CD4-positive, alpha-beta memory T cell (primary cell): ENCODE measurements at regions of chr6 and their contacts with region 1.

Region 1: DNA sequence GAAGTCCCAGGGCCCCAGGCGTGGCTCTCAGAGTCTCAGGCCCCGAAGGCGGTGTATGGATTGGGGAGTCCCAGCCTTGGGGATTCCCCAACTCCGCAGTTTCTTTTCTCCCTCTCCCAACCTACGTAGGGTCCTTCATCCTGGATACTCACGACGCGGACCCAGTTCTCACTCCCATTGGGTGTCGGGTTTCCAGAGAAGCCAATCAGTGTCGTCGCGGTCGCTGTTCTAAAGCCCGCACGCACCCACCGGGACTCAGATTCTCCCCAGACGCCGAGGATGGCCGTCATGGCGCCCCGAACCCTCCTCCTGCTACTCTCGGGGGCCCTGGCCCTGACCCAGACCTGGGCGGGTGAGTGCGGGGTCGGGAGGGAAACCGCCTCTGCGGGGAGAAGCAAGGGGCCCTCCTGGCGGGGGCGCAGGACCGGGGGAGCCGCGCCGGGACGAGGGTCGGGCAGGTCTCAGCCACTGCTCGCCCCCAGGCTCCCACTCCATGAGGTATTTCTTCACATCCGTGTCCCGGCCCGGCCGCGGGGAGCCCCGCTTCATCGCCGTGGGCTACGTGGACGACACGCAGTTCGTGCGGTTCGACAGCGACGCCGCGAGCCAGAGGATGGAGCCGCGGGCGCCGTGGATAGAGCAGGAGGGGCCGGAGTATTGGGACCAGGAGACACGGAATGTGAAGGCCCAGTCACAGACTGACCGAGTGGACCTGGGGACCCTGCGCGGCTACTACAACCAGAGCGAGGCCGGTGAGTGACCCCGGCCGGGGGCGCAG is at the start of gene HLA-A:
- DNase-seq: peak; percentile 90 to 98 (median 95)
- H3K4me3 ChIP-seq: peak within 1 kb of the TSS; percentile 62 to 78
- H3K4me3 Mint-ChIP-seq: peak within 1 kb of the TSS; percentile 95 to 100 (median 99)
- H3K27ac ChIP-seq: peak within 1 kb of the TSS; percentile 100
- H3K27ac Mint-ChIP-seq: peak within 1 kb of the TSS; percentile 100
- H3K4me1 ChIP-seq: peaks cover 46% of the 10 kb centered on the region
- H3K4me1 Mint-ChIP-seq: peaks cover 29 to 72% (median 44%) of the 10 kb centered on the region in 4 donors
- H3K27me3 ChIP-seq: no peaks in the 10 kb centered on the region
- H3K27me3 Mint-ChIP-seq: peaks cover 0 to 3% of the 10 kb centered on the region in 2 donors
- total RNA-seq, gene HLA-A: 2,115 to 2,200 TPM

Region 2: GRCh38 chr6:29792123-29793035 is 150.1 kb before region 1 on chr6:
- CTCF ChIA-PET with region 1: no interaction called
- POLR2A ChIA-PET with region 1: interaction called, 15 read pairs
- intact Hi-C with region 1: no loop called
- DNase-seq: peak; percentile 66 to 87 (median 69)
- H3K4me3 ChIP-seq: peak overlapping the region; percentile 45 to 79
- H3K4me3 Mint-ChIP-seq: peak overlapping the region; percentile 88 to 94 (median 91)
- H3K27ac ChIP-seq: peak overlapping the region; percentile 74
- H3K27ac Mint-ChIP-seq: peak overlapping the region; percentile 68 to 92 (median 86)
- H3K4me1 ChIP-seq: peaks cover 15% of the 10 kb centered on the region
- H3K4me1 Mint-ChIP-seq: peaks cover 8 to 36% (median 18%) of the 10 kb centered on the region in 4 donors
- H3K27me3 ChIP-seq: no peaks in the 10 kb centered on the region
- H3K27me3 Mint-ChIP-seq: peaks cover 14 to 17% of the 10 kb centered on the region in 2 donors

Region 3: DNA sequence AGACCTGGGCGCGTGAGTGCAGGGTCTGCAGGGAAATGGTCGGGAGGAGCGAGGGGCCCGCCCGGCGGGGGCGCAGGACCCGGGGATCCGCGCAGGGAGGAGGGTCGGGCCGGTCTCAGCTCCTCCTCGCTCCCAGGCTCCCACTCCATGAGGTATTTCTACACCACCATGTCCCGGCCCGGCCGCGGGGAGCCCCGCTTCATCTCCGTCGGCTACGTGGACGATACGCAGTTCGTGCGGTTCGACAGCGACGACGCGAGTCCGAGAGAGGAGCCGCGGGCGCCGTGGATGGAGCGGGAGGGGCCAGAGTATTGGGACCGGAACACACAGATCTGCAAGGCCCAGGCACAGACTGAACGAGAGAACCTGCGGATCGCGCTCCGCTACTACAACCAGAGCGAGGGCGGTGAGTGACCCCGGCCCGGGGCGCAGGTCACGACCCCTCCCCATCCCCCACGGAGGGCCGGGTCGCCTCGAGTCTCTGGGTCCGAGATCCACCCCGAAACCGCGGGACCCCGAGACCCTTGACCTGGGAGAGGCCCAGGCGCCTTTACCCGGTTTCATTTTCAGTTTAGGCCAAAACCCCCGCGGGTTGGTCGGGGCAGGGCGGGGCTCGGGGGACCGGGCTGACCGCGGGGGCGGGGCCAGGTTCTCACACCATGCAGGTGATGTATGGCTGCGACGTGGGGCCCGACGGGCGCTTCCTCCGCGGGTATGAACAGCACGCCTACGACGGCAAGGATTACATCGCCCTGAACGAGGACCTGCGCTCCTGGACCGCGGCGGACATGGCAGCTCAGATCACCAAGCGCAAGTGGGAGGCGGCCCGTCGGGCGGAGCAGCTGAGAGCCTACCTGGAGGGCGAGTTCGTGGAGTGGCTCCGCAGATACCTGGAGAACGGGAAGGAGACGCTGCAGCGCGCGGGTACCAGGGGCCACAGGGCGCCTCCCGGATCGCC is 54.4 kb before region 1 on chr6:
- CTCF ChIA-PET with region 1: no interaction called
- POLR2A ChIA-PET with region 1: interaction called, 72 read pairs
- intact Hi-C with region 1: loop called (anchors 1 kb)
- DNase-seq: peak; percentile 69 to 96 (median 83)
- H3K4me3 ChIP-seq: peak overlapping the region; percentile 6 to 60
- H3K4me3 Mint-ChIP-seq: peak overlapping the region; percentile 41 to 96 (median 90)
- H3K27ac ChIP-seq: peak overlapping the region; percentile 91
- H3K27ac Mint-ChIP-seq: peak overlapping the region in 6 of 7 donors; percentile 92 to 99 (median 97)
- H3K4me1 ChIP-seq: peaks cover 15% of the 10 kb centered on the region
- H3K4me1 Mint-ChIP-seq: peaks cover 0 to 69% (median 14%) of the 10 kb centered on the region in 4 donors
- H3K27me3 ChIP-seq: no peaks in the 10 kb centered on the region
- H3K27me3 Mint-ChIP-seq: no peaks in the 10 kb centered on the region

Region 4: GRCh38 chr6:29926413-29927274 is 15.8 kb before region 1 on chr6:
- CTCF ChIA-PET with region 1: no interaction called
- POLR2A ChIA-PET with region 1: interaction called, 53 read pairs
- intact Hi-C with region 1: loop called (anchors 1 kb)
- DNase-seq: peak; percentile 75 to 95 (median 80)
- H3K4me3 ChIP-seq: peak overlapping the region; percentile 6 to 70
- H3K4me3 Mint-ChIP-seq: peak overlapping the region in 7 of 8 donors; percentile 90 to 97 (median 95)
- H3K27ac ChIP-seq: peak overlapping the region; percentile 99
- H3K27ac Mint-ChIP-seq: peak overlapping the region in 6 of 7 donors; percentile 84 to 100 (median 99)
- H3K4me1 ChIP-seq: peaks cover 15% of the 10 kb centered on the region
- H3K4me1 Mint-ChIP-seq: peaks cover 0 to 28% (median 11%) of the 10 kb centered on the region in 4 donors
- H3K27me3 ChIP-seq: no peaks in the 10 kb centered on the region
- H3K27me3 Mint-ChIP-seq: no peaks in the 10 kb centered on the region

Region 5: DNA sequence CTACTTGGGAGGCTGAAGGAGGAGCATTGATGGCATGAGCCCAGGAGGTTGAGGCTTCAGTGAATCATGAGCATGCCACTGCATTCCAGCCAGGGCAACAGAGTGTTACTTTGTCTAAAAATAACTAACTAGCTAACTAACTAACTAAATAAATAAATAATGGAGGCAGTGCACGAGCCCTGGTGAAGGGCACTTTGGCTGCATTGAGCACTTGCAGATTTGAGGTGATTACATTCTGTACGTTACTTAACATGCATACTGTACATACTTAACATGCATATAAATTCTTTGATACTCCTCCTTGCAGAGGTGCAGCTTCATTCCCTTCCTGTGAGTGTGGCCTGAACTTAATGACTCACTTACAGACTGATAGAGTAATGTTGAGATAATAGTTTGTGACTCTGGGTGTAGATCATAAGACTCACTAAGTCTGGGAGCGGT is 10.6 kb after region 1 on chr6:
- CTCF ChIA-PET with region 1: no interaction called
- POLR2A ChIA-PET with region 1: interaction called, 20 read pairs
- intact Hi-C with region 1: no loop called
- DNase-seq: no peak
- H3K4me3 ChIP-seq: no peak overlapping the region
- H3K4me3 Mint-ChIP-seq: no peak overlapping the region
- H3K27ac ChIP-seq: no peak overlapping the region
- H3K27ac Mint-ChIP-seq: peak overlapping the region in 1 of 7 donors; percentile 23
- H3K4me1 ChIP-seq: peaks cover 12% of the 10 kb centered on the region
- H3K4me1 Mint-ChIP-seq: peaks cover 19 to 37% (median 31%) of the 10 kb centered on the region in 4 donors
- H3K27me3 ChIP-seq: no peaks in the 10 kb centered on the region
- H3K27me3 Mint-ChIP-seq: no peaks in the 10 kb centered on the region

Region 6: DNA sequence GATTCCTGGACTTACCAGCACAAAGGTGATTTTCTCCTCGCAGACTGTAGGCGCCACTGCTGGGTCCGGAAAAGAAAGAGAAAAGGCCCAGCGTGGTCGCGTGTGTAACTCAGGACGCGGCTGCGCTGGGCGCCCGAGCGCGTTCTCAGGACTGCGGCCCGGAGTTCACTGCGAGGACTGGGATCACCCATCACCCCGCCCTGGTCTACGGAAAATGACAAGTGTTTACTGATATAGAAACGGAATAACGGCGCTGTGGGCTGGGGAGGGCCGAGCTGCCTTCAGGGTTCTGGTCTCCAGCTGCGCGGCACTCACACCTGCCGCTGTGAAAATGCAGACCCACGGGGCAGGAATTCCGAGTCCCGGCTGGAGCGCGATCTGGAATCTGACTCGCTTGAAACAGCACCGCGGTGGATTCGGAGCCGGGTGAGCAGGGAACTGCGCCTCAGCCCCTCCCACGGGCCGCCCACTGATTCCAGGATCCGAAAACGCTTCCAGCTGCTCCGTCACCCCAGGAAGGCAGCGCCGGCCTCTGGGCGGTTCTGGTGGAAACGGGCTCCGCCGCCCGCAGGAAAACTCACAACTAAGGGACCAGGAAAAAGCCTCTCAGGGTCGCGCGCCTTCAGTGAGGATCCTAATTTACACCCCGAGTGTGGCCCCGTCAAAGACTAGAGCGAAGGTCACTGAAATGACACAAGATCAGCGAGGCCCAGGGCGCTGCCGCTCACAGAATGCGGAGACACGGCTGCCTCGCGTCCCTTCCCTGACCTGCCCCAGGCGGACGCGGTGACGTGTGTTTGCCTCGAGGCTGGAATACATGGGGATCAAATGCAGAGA is 34.3 kb after region 1 on chr6:
- CTCF ChIA-PET with region 1: no interaction called
- POLR2A ChIA-PET with region 1: interaction called, 48 read pairs
- intact Hi-C with region 1: loop called (anchors 5 kb)
- DNase-seq: peak; percentile 41 to 60 (median 55)
- H3K4me3 ChIP-seq: peak overlapping the region; percentile 52 to 54
- H3K4me3 Mint-ChIP-seq: peak overlapping the region; percentile 87 to 96 (median 94)
- H3K27ac ChIP-seq: no peak overlapping the region
- H3K27ac Mint-ChIP-seq: peak overlapping the region in 5 of 7 donors; percentile 29 to 88 (median 74)
- H3K4me1 ChIP-seq: peaks cover 25% of the 10 kb centered on the region
- H3K4me1 Mint-ChIP-seq: peaks cover 30 to 34% (median 31%) of the 10 kb centered on the region in 4 donors
- H3K27me3 ChIP-seq: peaks cover 17% of the 10 kb centered on the region
- H3K27me3 Mint-ChIP-seq: peaks cover 22 to 41% of the 10 kb centered on the region in 2 donors

Region 7: GRCh38 chr6:30066577-30067459 is 124.4 kb after region 1 on chr6 and contains the start of gene PPP1R11:
- CTCF ChIA-PET with region 1: no interaction called
- POLR2A ChIA-PET with region 1: interaction called, 6 read pairs
- intact Hi-C with region 1: loop called (anchors 2 kb)
- DNase-seq: peak; percentile 98 to 100 (median 99)
- H3K4me3 ChIP-seq: peak within 1 kb of the TSS; percentile 84 to 90
- H3K4me3 Mint-ChIP-seq: peak within 1 kb of the TSS; percentile 92 to 100 (median 97)
- H3K27ac ChIP-seq: peak within 1 kb of the TSS; percentile 99
- H3K27ac Mint-ChIP-seq: peak within 1 kb of the TSS; percentile 95 to 100 (median 99)
- H3K4me1 ChIP-seq: peaks cover 50% of the 10 kb centered on the region
- H3K4me1 Mint-ChIP-seq: peaks cover 35 to 75% (median 52%) of the 10 kb centered on the region in 4 donors
- H3K27me3 ChIP-seq: no peaks in the 10 kb centered on the region
- H3K27me3 Mint-ChIP-seq: peaks cover 4 to 6% of the 10 kb centered on the region in 2 donors
- total RNA-seq, gene PPP1R11: 65.2 to 66.2 TPM

Region 8: DNA sequence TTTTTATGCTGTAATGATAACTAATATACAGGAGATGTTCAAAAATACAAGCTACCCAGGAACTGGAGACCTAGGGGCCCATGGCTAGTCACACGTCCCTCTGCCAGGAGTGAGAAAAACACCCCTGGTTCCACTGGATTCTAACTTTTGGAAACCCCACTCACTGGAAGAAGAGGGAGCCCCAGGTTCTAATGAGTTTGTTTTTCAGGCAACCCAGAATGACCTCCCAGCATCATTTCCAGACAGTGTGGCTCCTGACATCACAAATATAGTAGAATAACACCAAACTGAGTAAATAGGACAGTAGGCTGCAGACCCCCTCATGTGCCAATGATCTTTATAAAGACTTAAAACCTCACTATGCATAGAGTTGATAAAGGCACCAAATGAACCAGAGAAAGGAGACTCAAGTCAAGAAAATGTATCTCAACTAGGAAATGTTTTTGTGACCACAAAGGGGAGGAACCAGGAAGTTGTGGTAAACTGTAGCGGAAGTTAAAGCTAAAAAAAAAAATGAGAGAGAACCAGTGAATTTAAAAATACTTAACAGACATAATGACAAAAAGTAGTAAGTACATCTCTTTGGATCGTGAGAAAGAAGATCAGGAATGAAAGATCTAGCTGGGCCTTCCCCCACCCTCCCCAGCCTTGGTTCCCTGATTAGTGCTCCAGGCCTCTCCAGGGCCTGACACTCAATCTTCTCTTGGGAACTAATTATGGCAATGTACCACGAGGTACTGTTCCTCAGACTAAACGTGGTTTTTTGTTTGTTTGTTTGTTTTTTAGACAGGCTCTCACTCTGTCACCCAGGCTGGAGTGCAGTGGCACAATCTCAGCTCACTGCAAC is 566.6 kb after region 1 on chr6:
- CTCF ChIA-PET with region 1: no interaction called
- POLR2A ChIA-PET with region 1: no interaction called
- intact Hi-C with region 1: no loop called
- DNase-seq: peak; percentile 72 to 85 (median 82)
- H3K4me3 ChIP-seq: peak overlapping the region; percentile 1 to 26
- H3K4me3 Mint-ChIP-seq: peak overlapping the region; percentile 66 to 86 (median 80)
- H3K27ac ChIP-seq: peak overlapping the region; percentile 32
- H3K27ac Mint-ChIP-seq: peak overlapping the region; percentile 78 to 96 (median 89)
- H3K4me1 ChIP-seq: peaks cover 77% of the 10 kb centered on the region
- H3K4me1 Mint-ChIP-seq: peaks cover 38 to 73% (median 52%) of the 10 kb centered on the region in 4 donors
- H3K27me3 ChIP-seq: no peaks in the 10 kb centered on the region
- H3K27me3 Mint-ChIP-seq: no peaks in the 10 kb centered on the region